Activated CD8-positive, alpha-beta T cell treated with anti-CD3 and anti-CD28 coated beads, Interleukin-2, amount 10 ng/mL, durations not matched to agents 7 days and 5 days (primary cell): ENCODE measurements at regions of chr19 and their contacts with region 1.

Region 1: GRCh38 chr19:3100865-3101730 is 6.9 kb downstream of the GNA11 start:
- DNase-seq: no peak
- ATAC-seq: no peak
- H3K4me3 Mint-ChIP-seq: no peak overlapping the region
- H3K27ac Mint-ChIP-seq: no peak overlapping the region
- H3K4me1 Mint-ChIP-seq: peaks cover 18% of the 10 kb centered on the region
- H3K27me3 Mint-ChIP-seq: peaks cover 18% of the 10 kb centered on the region

Region 2: DNA sequence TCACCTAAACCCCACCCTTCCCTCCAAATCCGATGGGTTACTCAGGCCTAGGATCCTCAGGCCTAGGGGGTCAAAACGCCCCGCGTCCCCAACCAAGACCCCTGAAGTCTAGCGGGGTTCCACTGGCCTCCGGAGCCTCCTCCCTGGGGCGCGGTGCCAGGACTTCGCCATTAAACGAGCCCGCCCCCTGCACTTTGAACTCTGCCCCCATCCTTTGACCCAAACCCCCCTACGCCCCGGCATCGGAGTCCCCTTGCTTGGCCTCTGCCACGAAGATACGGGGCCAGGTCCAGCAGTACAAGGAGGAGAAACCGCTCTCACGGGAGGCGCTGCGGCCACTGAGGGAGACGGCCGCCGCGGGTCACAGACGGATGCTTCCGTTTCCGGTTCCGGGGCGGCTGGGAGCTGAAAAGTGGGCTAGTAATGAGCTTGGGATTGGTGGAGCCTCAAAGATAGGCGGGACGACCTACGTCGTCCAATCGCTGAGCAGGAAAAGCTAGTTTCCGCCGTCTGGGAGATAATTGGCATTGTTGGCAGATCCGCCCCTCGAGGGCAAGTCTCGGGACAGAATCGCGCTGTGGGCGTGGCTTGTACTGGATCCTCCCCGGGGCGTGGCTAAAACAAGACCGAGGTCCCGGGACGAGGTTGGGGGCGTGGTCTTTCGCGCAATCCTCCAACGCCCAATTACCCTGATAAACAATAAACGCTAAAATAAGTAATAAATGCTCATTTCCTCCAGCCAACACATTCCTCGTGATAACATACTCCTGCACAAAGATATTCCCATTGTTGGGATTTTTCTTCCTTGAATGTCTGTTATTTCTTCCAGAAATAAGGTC is 150.6 kb before region 1 on chr19:
- CTCF ChIA-PET with region 1: interaction called, 86 read pairs
- POLR2A ChIA-PET with region 1: no interaction called
- DNase-seq: peak; percentile 100
- ATAC-seq: peak; percentile 99
- H3K4me3 Mint-ChIP-seq: peak overlapping the region; percentile 97
- H3K27ac Mint-ChIP-seq: peak overlapping the region; percentile 96
- H3K4me1 Mint-ChIP-seq: peaks cover 35% of the 10 kb centered on the region
- H3K27me3 Mint-ChIP-seq: no peaks in the 10 kb centered on the region

Region 3: GRCh38 chr19:2967972-2968371 is 133.1 kb before region 1 on chr19:
- CTCF ChIA-PET with region 1: interaction called, 54 read pairs
- POLR2A ChIA-PET with region 1: no interaction called
- DNase-seq: no peak
- ATAC-seq: no peak
- H3K4me3 Mint-ChIP-seq: no peak overlapping the region
- H3K27ac Mint-ChIP-seq: no peak overlapping the region
- H3K4me1 Mint-ChIP-seq: peaks cover 10% of the 10 kb centered on the region
- H3K27me3 Mint-ChIP-seq: no peaks in the 10 kb centered on the region

Region 4: GRCh38 chr19:2992958-2993357 is 108.1 kb before region 1 on chr19:
- CTCF ChIA-PET with region 1: no interaction called
- POLR2A ChIA-PET with region 1: no interaction called
- DNase-seq: no peak
- ATAC-seq: no peak
- H3K4me3 Mint-ChIP-seq: no peak overlapping the region
- H3K27ac Mint-ChIP-seq: no peak overlapping the region
- H3K4me1 Mint-ChIP-seq: no peaks in the 10 kb centered on the region
- H3K27me3 Mint-ChIP-seq: peaks cover 2% of the 10 kb centered on the region

Region 5: GRCh38 chr19:3024870-3025550 is 76.1 kb before region 1 on chr19:
- CTCF ChIA-PET with region 1: interaction called, 11 read pairs
- POLR2A ChIA-PET with region 1: no interaction called
- DNase-seq: no peak
- ATAC-seq: no peak
- H3K4me3 Mint-ChIP-seq: no peak overlapping the region
- H3K27ac Mint-ChIP-seq: peak overlapping the region; percentile 43
- H3K4me1 Mint-ChIP-seq: peaks cover 30% of the 10 kb centered on the region
- H3K27me3 Mint-ChIP-seq: peaks cover 35% of the 10 kb centered on the region

Region 6: GRCh38 chr19:3047425-3048189 is 53.5 kb before region 1 on chr19:
- CTCF ChIA-PET with region 1: interaction called, 13 read pairs
- POLR2A ChIA-PET with region 1: no interaction called
- DNase-seq: peak; percentile 58
- ATAC-seq: peak; percentile 56
- H3K4me3 Mint-ChIP-seq: peak overlapping the region; percentile 57
- H3K27ac Mint-ChIP-seq: no peak overlapping the region
- H3K4me1 Mint-ChIP-seq: peaks cover 6% of the 10 kb centered on the region
- H3K27me3 Mint-ChIP-seq: peaks cover 10% of the 10 kb centered on the region

Region 7: DNA sequence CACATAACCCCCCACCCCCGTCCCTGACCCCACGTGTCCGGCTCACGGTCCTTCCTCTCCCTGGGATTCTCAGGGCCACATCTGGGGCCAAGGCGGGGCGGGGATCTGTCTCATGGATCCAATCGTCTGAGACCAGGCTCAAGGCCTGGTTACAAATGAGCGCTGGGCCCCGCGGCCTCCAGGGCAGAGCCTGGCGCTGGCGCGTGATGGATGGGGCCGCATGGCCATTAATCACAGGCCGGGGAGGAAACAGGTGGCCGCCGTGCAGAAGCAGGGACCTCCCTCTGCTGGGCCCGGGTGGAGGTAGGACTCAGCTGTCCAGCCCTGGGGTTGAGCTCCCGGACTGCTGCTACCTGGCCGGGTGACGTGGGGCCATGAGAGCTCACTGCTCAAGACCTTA is 33.0 kb before region 1 on chr19:
- CTCF ChIA-PET with region 1: interaction called, 47 read pairs
- POLR2A ChIA-PET with region 1: interaction called, 4 read pairs
- DNase-seq: no peak
- ATAC-seq: no peak
- H3K4me3 Mint-ChIP-seq: no peak overlapping the region
- H3K27ac Mint-ChIP-seq: no peak overlapping the region
- H3K4me1 Mint-ChIP-seq: peaks cover 12% of the 10 kb centered on the region
- H3K27me3 Mint-ChIP-seq: no peaks in the 10 kb centered on the region

Region 8: GRCh38 chr19:3132971-3133792 is 32.1 kb after region 1 on chr19:
- CTCF ChIA-PET with region 1: interaction called, 38 read pairs
- POLR2A ChIA-PET with region 1: no interaction called
- DNase-seq: peak; percentile 86
- ATAC-seq: peak; percentile 92
- H3K4me3 Mint-ChIP-seq: peak overlapping the region; percentile 66
- H3K27ac Mint-ChIP-seq: peak overlapping the region; percentile 97
- H3K4me1 Mint-ChIP-seq: peaks cover 52% of the 10 kb centered on the region
- H3K27me3 Mint-ChIP-seq: no peaks in the 10 kb centered on the region

Region 9: DNA sequence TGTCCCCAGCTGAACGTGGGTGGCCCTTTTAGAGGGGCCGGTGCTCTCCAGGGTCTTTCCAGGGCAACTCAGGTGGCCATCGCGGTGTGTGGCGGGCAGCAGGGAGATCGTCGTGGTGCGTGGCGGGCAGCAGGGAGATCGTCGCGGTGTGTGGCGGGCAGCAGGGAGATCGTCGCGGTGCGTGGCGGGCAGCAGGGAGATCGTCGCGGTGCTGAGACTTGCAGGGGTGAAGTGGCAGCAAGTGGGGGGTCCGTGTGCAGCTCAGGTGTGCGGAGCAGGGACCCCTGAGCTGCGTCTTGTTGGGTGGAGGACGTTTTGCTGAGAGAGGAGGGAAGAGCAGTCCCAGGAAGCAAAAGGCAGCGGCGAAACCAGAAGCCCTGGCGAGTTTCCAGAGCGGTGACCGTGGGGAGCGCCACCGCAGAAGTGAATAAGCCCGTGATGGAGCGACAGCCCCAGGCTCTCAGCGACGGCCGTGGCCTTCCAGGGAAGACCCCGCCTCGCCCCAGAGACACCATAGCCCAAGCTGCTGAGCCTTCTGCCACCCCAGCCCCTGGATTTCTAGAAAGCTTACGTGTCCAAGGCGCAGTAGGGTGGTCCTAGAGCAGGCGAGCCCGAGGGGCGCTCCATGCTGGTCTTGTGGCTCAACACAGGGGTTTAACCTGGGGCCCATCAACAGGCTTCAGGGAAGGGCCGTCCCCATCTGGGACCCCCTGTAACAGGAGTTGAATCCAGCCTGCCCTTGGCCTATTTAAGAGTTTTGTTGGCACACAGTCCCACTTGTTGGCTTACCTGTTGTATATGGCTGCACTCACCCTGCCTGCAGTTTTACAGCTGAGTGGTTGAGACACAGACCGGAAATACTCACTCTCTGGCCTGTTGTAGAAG is 90.1 kb after region 1 on chr19:
- CTCF ChIA-PET with region 1: no interaction called
- POLR2A ChIA-PET with region 1: no interaction called
- DNase-seq: no peak
- ATAC-seq: no peak
- H3K4me3 Mint-ChIP-seq: no peak overlapping the region
- H3K27ac Mint-ChIP-seq: peak overlapping the region; percentile 43
- H3K4me1 Mint-ChIP-seq: peaks cover 35% of the 10 kb centered on the region
- H3K27me3 Mint-ChIP-seq: no peaks in the 10 kb centered on the region